IMR-90 (cell line): ENCODE measurements at regions of chr5 and their contacts with region 1.

Region 1: GRCh38 chr5:148760945-148761638 is 65.3 kb upstream of the ADRB2 start:
- DNase-seq: no peak
- ATAC-seq: no peak
- H3K4me3 ChIP-seq: no peak overlapping the region
- H3K27ac ChIP-seq: no peak overlapping the region
- H3K4me1 ChIP-seq: no peaks in the 10 kb centered on the region
- H3K27me3 ChIP-seq: peaks cover 2% of the 10 kb centered on the region; the same call in 1 of the 2 replicates
- CTCF ChIP-seq: no peak
- POLR2A ChIP-seq: no peak
- RAD21 ChIP-seq: no peak

Region 2: DNA sequence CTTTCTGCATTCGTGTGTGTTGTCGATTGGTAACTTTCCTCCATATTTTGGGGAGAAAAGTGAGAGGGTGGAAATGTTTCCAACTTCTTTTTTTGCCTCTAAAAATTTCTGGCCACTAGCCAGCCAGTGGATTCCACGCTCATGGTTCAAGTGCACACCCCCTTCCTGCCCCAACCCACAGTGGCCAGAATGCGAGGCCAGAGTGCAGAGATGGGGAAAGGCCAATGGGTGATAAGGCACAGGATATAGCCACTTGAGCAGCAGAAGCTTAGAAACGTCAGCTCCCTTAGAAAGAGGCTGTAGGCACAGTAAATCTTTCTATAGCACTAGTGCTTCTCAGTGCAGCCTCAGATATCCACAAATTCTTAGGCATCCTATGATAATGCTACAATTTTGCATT is 10.5 kb before region 1 on chr5:
- CTCF ChIA-PET with region 1: interaction called, 3 read pairs
- POLR2A ChIA-PET with region 1: interaction called, 10 read pairs
- dilution Hi-C with region 1: no loop called
- in situ Hi-C with region 1: no loop called
- intact Hi-C with region 1: no loop called
- DNase-seq: no peak
- ATAC-seq: no peak
- H3K4me3 ChIP-seq: no peak overlapping the region
- H3K27ac ChIP-seq: no peak overlapping the region
- H3K4me1 ChIP-seq: no peaks in the 10 kb centered on the region
- H3K27me3 ChIP-seq: no peaks in the 10 kb centered on the region
- CTCF ChIP-seq: no peak
- POLR2A ChIP-seq: no peak
- RAD21 ChIP-seq: no peak